Activated CD8-positive, alpha-beta T cell treated with anti-CD3 and anti-CD28 coated beads, Interleukin-2, amount 10 ng/mL, durations not matched to agents 7 days and 5 days (primary cell): ENCODE measurements at regions of chr5 and their contacts with region 1.

Region 1: GRCh38 chr5:147628058-147628895 is 118.4 kb upstream of the DPYSL3 start:
- DNase-seq: peak; percentile 77
- ATAC-seq: peak; percentile 77
- H3K4me3 Mint-ChIP-seq: no peak overlapping the region
- H3K27ac Mint-ChIP-seq: no peak overlapping the region
- H3K4me1 Mint-ChIP-seq: no peaks in the 10 kb centered on the region
- H3K27me3 Mint-ChIP-seq: no peaks in the 10 kb centered on the region

Region 2: GRCh38 chr5:147648597-147648996 is 20.3 kb after region 1 on chr5:
- CTCF ChIA-PET with region 1: no interaction called
- POLR2A ChIA-PET with region 1: no interaction called
- DNase-seq: no peak
- ATAC-seq: no peak
- H3K4me3 Mint-ChIP-seq: no peak overlapping the region
- H3K27ac Mint-ChIP-seq: no peak overlapping the region
- H3K4me1 Mint-ChIP-seq: no peaks in the 10 kb centered on the region
- H3K27me3 Mint-ChIP-seq: no peaks in the 10 kb centered on the region

Region 3: GRCh38 chr5:147822686-147823491 is 194.6 kb after region 1 on chr5:
- CTCF ChIA-PET with region 1: interaction called, 88 read pairs
- POLR2A ChIA-PET with region 1: interaction called, 3 read pairs
- DNase-seq: peak; percentile 68
- ATAC-seq: peak; percentile 90
- H3K4me3 Mint-ChIP-seq: no peak overlapping the region
- H3K27ac Mint-ChIP-seq: no peak overlapping the region
- H3K4me1 Mint-ChIP-seq: peaks cover 2% of the 10 kb centered on the region
- H3K27me3 Mint-ChIP-seq: peaks cover 11% of the 10 kb centered on the region